Adrenal gland (tissue), 19 donors: ENCODE measurements at regions of chr16 and their contacts with region 1.

Region 1: GRCh38 chr16:25106567-25107465 is 4.7 kb upstream of the LCMT1 start:
- DNase-seq: peak; percentile 96 to 99 (median 98)
- H3K4me3 ChIP-seq: peak overlapping the region; percentile 54 to 82 (median 71)
- H3K27ac ChIP-seq: peak overlapping the region in 4 of 5 donors; percentile 84 to 96 (median 90)
- H3K4me1 ChIP-seq: peaks cover 14 to 31% of the 10 kb centered on the region in 2 donors
- H3K27me3 ChIP-seq: no peaks in the 10 kb centered on the region
- CTCF ChIP-seq: peak in 4 of 6 experiments; percentile 33 to 49 (median 38)
- POLR2A ChIP-seq: peak; percentile 70 to 91

Region 2: GRCh38 chr16:24950275-24950674 is 156.5 kb before region 1 on chr16:
- intact Hi-C with region 1: no loop called
- DNase-seq: peak; percentile 78 to 91 (median 86)
- H3K4me3 ChIP-seq: no peak overlapping the region
- H3K27ac ChIP-seq: peak overlapping the region in 2 of 5 donors; percentile 15 to 51
- H3K4me1 ChIP-seq: no peaks in the 10 kb centered on the region
- H3K27me3 ChIP-seq: no peaks in the 10 kb centered on the region
- CTCF ChIP-seq: no peak
- POLR2A ChIP-seq: no peak

Region 3: GRCh38 chr16:25006469-25007055 is 100.3 kb before region 1 on chr16:
- intact Hi-C with region 1: no loop called
- DNase-seq: peak in 6 of 7 donors; percentile 40 to 72 (median 58)
- H3K4me3 ChIP-seq: no peak overlapping the region
- H3K27ac ChIP-seq: peak overlapping the region in 4 of 5 donors; percentile 40 to 74 (median 55)
- H3K4me1 ChIP-seq: peaks cover 24 to 53% of the 10 kb centered on the region in 2 donors
- H3K27me3 ChIP-seq: no peaks in the 10 kb centered on the region
- CTCF ChIP-seq: no peak
- POLR2A ChIP-seq: no peak

Region 4: DNA sequence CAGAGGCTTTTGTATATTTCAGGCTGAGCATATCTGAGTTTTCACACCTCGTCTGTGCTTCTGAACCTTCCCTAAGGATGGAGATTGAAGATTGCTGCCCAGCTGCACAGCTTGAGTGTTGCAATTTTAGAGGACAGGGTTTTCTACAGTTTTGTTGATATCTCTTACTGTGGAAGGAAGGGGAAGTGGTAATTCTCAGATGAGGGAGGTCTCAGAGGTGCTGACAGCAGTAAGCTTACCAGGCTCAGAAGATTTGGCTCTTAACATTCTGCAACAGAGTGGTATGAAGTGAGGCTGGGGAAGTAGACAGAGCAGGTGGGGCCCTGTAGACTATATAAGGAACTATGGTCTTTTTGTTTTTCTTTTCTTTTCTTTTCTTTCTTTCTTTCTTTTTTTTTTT is 45.9 kb before region 1 on chr16:
- intact Hi-C with region 1: loop called in 1 of 2 experiments (anchors 5 kb)
- DNase-seq: no peak
- H3K4me3 ChIP-seq: no peak overlapping the region
- H3K27ac ChIP-seq: no peak overlapping the region
- H3K4me1 ChIP-seq: peaks cover 3 to 21% of the 10 kb centered on the region in 2 donors
- H3K27me3 ChIP-seq: no peaks in the 10 kb centered on the region
- CTCF ChIP-seq: no peak
- POLR2A ChIP-seq: no peak